ENCODE measurements at regions of chr2 and their contacts with region 1.

Region 1: GRCh38 chr2:31170071-31170698 is 31.9 kb upstream of the GALNT14 start:
- H3K4me3 Mint-ChIP-seq: no peak overlapping the region
- H3K27ac Mint-ChIP-seq: no peak overlapping the region
- H3K4me1 Mint-ChIP-seq: peaks cover 6% of the 10 kb centered on the region
- H3K27me3 Mint-ChIP-seq: peaks cover 6% of the 10 kb centered on the region

Region 2: DNA sequence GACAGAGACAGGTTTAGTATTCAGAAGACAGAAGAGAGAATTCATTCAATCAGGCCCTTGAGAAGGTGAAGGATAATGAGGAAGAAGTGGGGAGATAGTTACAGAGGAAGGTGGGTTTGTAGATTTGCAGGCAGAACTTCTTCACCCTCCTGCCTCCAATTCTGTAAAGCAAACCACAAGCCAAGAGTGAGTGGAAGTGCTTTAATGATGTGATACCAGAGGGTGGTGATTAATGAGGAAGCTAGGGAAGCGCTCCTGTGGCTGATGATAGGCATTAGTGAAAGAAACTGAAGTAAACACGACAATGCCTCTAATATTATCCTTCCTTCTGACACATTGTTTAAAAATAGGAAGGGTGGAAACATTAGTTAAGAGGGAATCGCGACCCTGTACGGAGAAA is 441.2 kb before region 1 on chr2:
- intact Hi-C with region 1: loop called (anchors 5 kb)
- H3K4me3 Mint-ChIP-seq: no peak overlapping the region
- H3K27ac Mint-ChIP-seq: no peak overlapping the region
- H3K4me1 Mint-ChIP-seq: no peaks in the 10 kb centered on the region
- H3K27me3 Mint-ChIP-seq: peaks cover 27% of the 10 kb centered on the region

Region 3: DNA sequence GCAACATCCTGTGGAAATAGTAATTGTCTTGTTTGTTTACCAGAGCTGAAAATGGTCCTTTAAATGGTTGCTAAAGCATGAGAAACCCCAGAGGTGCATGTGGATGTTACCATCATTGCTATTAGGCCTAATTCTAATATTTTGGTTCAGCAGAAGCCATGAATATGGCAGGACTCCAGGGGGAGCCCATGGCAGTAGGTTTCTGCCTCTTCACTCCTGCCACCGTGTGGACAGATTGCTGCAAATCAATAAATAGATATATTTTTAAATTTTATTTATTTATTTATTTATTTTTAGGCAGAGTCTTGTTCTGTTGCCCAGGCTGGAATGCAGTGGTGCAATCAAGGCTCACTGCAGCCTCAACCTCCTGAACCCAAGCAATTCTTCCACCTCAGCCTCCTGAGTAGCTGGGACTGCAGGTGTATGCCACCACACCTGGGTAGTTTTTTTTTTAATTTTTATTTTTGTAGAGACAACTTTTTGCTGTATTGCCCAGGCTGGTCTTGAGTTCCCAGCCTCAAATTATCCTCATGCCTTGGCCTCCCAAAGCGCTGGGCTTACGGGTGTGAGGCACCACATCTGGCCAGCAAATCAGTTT is 308.0 kb before region 1 on chr2:
- intact Hi-C with region 1: loop called (anchors 1 kb)
- H3K4me3 Mint-ChIP-seq: no peak overlapping the region
- H3K27ac Mint-ChIP-seq: no peak overlapping the region
- H3K4me1 Mint-ChIP-seq: peaks cover 18% of the 10 kb centered on the region
- H3K27me3 Mint-ChIP-seq: peaks cover 7% of the 10 kb centered on the region

Region 4: DNA sequence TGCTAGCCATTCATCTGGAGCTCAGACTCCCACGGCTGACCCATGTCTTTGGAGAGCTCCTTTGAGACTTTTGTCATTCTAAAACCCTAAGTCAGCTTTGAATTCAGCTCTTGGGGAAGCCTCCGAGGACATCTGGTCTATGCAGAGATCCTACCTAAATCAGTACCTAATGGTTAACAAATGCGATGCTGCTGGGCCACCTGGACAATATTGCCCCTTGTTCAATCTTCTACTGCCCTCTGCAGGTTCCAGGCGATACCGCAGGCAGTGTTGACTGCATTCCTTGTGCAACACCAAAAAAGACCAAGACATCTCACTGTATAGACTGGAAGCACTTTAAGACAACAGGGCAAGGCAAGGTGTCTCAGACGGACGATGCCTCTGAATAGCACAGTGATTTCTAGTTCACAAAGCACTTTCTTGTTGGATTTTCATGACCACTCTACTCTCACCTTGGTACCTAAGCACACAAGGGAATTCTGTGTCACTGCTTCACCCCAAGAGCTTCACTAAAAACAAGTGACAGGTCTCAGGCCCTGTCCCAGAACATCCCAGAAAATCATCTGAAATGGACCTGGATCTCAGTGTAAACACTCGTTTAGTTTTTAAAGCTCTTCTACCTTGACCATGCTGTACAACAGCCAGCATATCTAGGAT is 163.5 kb after region 1 on chr2:
- intact Hi-C with region 1: loop called (anchors 2 kb)
- H3K4me3 Mint-ChIP-seq: no peak overlapping the region
- H3K27ac Mint-ChIP-seq: no peak overlapping the region
- H3K4me1 Mint-ChIP-seq: peaks cover under 1% of the 10 kb centered on the region
- H3K27me3 Mint-ChIP-seq: no peaks in the 10 kb centered on the region

Measured in dendritic cell treated with granulocyte-macrophage colony-stimulating factor and Interleukin-4, amounts not matched to agents 40 ng/mL and 50 ng/mL, for 4 days (primary cell).